H1 (cell line): ENCODE measurements at regions of chr16 and their contacts with region 1.

Region 1: DNA sequence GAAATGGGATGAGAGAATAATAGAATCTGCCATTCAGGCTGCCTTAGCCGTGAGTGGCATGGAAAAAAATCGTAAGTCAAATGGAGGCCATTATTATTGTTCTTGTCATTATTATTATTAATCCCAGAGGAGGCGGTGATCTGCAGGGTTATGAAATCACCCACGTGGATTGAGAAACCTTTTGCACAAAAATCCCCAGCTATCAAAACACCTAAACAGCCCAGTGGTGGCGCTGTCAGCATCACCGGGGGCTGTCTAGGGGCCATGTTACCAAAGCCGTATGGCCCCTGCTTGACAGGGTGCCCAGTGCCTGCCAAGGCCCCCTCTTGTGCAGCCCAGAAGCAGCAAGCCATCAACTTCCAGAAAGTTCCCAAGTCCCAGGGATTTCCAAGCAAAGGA is 25.2 kb downstream of the CNGB1 start:
- DNase-seq: no peak
- H3K4me3 ChIP-seq: no peak overlapping the region
- H3K27ac ChIP-seq: no peak overlapping the region
- H3K4me1 ChIP-seq: no peaks in the 10 kb centered on the region; a peak in 1 of 7 replicates
- H3K27me3 ChIP-seq: no peaks in the 10 kb centered on the region
- CTCF ChIP-seq: peak; percentile 48 to 56 (median 48); a peak in 3 of 4 replicates
- EP300 ChIP-seq: no peak
- POLR2A ChIP-seq: no peak
- RAD21 ChIP-seq: peak; percentile 17 to 39; a peak in 2 of 4 replicates

Region 2: DNA sequence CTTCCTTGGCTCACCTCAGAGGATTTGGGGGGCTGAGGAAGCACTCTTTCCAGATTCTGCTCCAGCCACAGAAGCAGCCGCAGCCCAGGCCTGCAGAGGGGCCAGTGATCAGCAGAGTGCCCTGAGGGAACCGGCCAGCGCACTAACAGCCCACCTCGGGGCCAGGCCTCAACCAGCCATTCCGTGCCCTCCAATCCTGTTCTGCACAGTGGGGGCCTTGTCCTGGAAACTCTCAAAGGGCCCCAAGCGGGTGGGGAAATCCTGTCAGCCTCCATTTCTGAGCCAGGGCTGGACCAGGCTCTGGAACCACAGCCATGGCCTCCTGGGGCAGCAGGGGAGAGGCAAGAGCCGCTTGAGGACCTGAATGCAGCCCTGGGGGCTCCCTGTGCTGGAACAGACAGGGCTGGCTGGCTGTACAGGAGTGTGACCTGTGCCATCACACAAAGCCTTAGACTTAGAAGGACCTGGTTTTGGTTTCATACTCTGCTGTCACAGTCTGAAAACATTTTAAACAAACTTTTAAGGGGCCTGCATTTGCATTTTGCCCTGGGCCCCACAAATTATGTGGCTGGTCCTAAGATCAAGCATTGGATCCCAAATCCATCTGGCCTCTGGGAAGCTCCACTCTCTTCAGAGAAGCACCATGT is 15.2 kb after region 1 on chr16:
- CTCF ChIA-PET with region 1: interaction called, 26 read pairs
- POLR2A ChIA-PET with region 1: no interaction called
- DNase-seq: no peak
- H3K4me3 ChIP-seq: no peak overlapping the region
- H3K27ac ChIP-seq: no peak overlapping the region
- H3K4me1 ChIP-seq: peaks cover 0 to 10% (median 5%) of the 10 kb centered on the region in 4 experiments; a peak in 6 of 7 replicates
- H3K27me3 ChIP-seq: no peaks in the 10 kb centered on the region
- CTCF ChIP-seq: no peak
- EP300 ChIP-seq: no peak
- POLR2A ChIP-seq: no peak
- RAD21 ChIP-seq: no peak

Region 3: GRCh38 chr16:57976331-57976796 is 30.6 kb after region 1 on chr16:
- CTCF ChIA-PET with region 1: interaction called, 13 read pairs
- POLR2A ChIA-PET with region 1: interaction called, 3 read pairs
- DNase-seq: no peak
- H3K4me3 ChIP-seq: no peak overlapping the region
- H3K27ac ChIP-seq: no peak overlapping the region
- H3K4me1 ChIP-seq: no peaks in the 10 kb centered on the region; a peak in 1 of 7 replicates
- H3K27me3 ChIP-seq: no peaks in the 10 kb centered on the region
- CTCF ChIP-seq: no peak
- EP300 ChIP-seq: no peak
- POLR2A ChIP-seq: no peak
- RAD21 ChIP-seq: no peak